ENCODE measurements at regions of chr3 and their contacts with region 1.

Region 1: GRCh38 chr3:114571363-114571762 is 277.5 kb downstream of the TIGIT start:
- DNase-seq: no peak
- H3K4me3 ChIP-seq: no peak overlapping the region
- H3K27ac ChIP-seq: no peak overlapping the region
- H3K4me1 ChIP-seq: peaks cover 0 to 10% (median 7%) of the 10 kb centered on the region in 4 donors
- H3K27me3 ChIP-seq: no peaks in the 10 kb centered on the region
- CTCF ChIP-seq: no peak
- EP300 ChIP-seq: no peak
- POLR2A ChIP-seq: no peak

Region 2: GRCh38 chr3:114454551-114455251 is 116.7 kb before region 1 on chr3:
- intact Hi-C with region 1: loop called (anchors 10 kb)
- DNase-seq: no peak
- H3K4me3 ChIP-seq: peak overlapping the region; percentile 20 to 55 (median 46)
- H3K27ac ChIP-seq: peak overlapping the region; percentile 33 to 72 (median 52)
- H3K4me1 ChIP-seq: peaks cover 0 to 42% (median 18%) of the 10 kb centered on the region in 4 donors
- H3K27me3 ChIP-seq: no peaks in the 10 kb centered on the region
- CTCF ChIP-seq: peak in 2 of 4 experiments; percentile 5 to 30
- EP300 ChIP-seq: no peak
- POLR2A ChIP-seq: no peak

Region 3: DNA sequence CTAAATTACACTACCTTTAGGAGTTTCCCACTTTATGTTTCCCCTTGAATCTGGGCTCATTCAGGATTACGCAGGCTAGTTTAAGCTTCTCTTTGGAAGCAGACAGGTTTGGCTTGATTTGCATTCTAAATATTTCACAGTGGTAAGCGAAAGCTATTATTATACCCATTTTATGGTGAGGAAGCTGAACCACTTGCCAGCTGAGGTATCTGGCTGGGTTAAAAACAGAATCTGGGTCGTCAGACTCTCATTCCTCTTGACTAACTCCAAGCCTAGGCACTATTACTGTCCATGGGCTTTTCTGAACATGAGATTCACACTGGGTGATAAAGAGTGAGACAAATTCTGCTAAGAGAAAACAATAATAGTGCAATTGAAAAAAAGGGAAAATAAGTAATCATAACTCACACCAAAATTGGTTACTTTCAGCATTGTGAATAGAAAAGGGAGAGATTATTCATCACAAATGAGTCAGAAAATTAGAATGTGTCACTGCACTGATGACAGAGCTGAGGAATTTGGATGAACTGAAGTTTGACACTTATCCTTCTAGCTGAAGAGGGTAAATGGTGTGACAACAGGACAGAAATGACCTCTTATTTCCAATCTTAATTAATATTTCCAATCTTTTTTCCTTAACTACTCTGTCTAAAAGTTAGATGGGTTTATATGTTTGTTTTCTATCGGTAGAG is 66.3 kb before region 1 on chr3:
- intact Hi-C with region 1: no loop called
- DNase-seq: no peak
- H3K4me3 ChIP-seq: no peak overlapping the region
- H3K27ac ChIP-seq: peak overlapping the region in 1 of 4 donors; percentile 12
- H3K4me1 ChIP-seq: peaks cover 0 to 22% (median 5%) of the 10 kb centered on the region in 4 donors
- H3K27me3 ChIP-seq: no peaks in the 10 kb centered on the region
- CTCF ChIP-seq: no peak
- EP300 ChIP-seq: no peak
- POLR2A ChIP-seq: no peak